Common myeloid progenitor, CD34-positive (primary cell): ENCODE measurements at regions of chr5 and their contacts with region 1.

Region 1: DNA sequence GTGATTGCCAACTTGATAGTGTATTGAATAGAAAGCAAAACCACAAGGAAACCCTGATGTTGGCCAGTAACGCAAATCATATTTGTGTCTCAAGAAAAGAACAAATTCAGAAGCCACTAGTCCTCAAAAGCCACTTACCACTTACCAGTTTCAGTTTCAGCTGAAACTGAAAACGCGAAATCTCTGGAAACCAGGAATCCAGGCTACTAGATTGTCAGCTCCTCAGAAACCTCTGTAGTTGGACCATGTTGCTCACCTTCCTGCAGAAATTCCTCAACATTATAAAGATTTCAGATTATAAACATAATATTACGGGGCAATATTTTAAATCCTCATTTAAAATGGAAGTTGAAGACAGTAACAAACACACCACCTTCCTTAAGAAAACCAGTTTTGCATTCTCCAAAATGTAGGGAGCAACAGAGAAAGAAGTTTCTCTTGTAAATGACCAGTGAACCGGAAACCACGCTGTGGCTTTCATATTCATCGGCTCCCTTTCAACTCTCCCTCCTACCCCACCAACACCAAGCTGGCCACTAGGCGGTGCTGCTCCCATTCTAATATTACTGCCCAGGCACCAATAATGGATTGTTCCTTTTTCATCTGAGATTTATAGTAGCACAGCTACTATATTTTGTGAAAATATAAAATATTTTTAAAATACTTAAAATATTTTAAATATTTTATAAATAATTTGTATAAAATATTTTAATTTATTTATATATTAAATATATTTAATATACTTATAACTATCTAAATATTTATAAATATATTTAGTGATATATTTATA is 8.7 kb upstream of the TMED7 start:
- DNase-seq: peak; percentile 85 to 93 (median 91)
- H3K4me3 ChIP-seq: peak overlapping the region in 6 of 7 experiments; percentile 61 to 87 (median 77)
- H3K27ac ChIP-seq: peak overlapping the region in 1 of 2 experiments; percentile 38
- H3K4me1 ChIP-seq: peaks cover 2 to 10% (median 4%) of the 10 kb centered on the region in 4 experiments
- H3K27me3 ChIP-seq: no peaks in the 10 kb centered on the region

Region 2: DNA sequence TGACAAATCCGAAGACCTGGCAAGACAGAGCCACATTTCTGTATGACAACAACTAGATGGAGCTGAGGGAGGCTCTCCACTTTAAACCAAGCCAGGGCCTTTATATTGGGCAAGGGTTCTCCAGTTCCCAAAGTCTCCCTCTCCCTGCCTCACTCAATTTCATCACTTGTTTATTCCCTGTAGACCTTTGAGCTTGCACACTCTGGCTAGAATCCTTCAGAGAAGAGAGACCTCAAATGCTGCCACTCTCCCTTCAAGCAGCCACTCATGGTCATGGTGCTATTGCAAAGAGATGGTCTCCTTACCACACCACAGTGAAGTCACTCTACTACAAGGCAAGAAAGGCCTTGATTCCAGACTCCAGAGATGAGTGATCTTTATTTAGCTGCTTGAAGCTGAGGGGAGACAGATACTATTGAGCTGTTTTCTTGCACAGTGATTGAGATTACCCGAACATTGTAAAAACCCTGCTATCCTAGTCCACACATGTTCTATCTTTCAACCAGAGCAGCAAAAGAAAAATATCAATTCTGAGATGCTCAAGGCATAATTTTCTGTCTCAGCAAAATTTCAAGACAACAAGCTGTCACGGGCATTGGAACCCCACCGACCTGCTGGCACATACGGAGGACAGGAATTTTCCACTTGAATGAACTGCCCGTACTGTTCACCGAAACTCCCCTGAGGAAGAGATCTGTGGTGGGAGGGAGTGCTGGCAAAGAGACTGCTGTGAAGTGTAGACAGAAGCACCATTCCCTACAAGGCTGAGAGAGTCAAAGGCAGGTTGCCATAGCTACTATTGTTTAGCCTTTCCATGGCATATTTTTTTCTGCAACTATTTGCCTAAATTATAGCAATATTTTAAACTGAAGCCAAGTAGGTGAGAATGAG is 100.8 kb after region 1 on chr5:
- CTCF ChIA-PET with region 1: no interaction called
- POLR2A ChIA-PET with region 1: no interaction called
- DNase-seq: no peak
- H3K4me3 ChIP-seq: no peak overlapping the region
- H3K27ac ChIP-seq: no peak overlapping the region
- H3K4me1 ChIP-seq: no peaks in the 10 kb centered on the region
- H3K27me3 ChIP-seq: peaks cover 0 to 6% (median 4%) of the 10 kb centered on the region in 5 experiments

Region 3: GRCh38 chr5:115857636-115858309 is 223.2 kb after region 1 on chr5:
- CTCF ChIA-PET with region 1: no interaction called
- POLR2A ChIA-PET with region 1: no interaction called
- DNase-seq: peak in 1 of 3 donors; percentile 10
- H3K4me3 ChIP-seq: no peak overlapping the region
- H3K27ac ChIP-seq: no peak overlapping the region
- H3K4me1 ChIP-seq: peaks cover 0 to 5% (median 0%) of the 10 kb centered on the region in 4 experiments
- H3K27me3 ChIP-seq: no peaks in the 10 kb centered on the region

Region 4: DNA sequence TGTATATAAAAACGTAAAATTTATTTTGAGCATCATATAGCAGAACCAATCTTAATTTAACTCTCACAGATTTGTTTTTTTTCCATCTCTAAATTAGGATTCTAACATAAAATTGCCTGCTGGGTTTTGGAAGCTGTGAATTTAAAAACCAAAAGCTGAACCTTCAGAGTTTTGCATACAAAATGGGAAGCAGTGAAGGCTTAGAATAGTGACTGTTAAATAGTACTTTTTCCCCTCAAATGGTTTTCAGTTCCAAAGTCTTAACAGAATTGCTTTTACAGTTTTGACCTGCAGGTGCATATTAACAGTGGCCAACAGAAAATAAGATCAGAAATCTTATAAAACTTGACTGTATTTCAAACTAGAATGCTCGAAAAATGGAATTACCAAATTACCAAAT is 272.6 kb after region 1 on chr5:
- CTCF ChIA-PET with region 1: no interaction called
- POLR2A ChIA-PET with region 1: no interaction called
- DNase-seq: no peak
- H3K4me3 ChIP-seq: no peak overlapping the region
- H3K27ac ChIP-seq: no peak overlapping the region
- H3K4me1 ChIP-seq: no peaks in the 10 kb centered on the region
- H3K27me3 ChIP-seq: no peaks in the 10 kb centered on the region

Region 5: DNA sequence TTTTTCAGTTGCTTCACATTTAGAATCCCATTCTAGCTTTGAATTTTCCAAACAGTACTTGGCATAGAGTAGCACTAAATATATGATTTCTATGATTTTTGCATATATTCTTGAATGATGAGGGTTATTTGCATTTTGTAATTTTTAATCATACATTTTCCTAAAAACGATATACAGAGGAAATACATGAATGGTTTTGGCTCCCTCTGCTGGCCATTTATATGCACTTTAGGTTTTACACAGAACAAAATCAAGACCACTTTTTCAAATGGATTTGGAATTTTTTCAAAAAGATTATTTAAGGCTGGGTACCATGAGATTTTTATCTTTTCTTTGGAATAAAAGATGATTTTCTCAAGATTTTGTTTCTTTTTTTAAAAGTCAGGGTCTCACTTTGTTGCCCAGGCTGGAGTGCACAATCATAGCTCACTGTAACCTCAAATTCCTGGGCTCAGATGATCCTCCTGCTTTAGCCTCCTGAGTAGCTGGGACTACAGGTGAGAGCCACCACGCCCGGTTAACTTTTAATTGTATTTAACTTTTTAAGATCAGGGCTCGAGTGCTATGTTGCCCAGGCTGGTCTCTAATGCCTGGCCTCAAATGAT is 433.6 kb after region 1 on chr5:
- CTCF ChIA-PET with region 1: interaction called, 14 read pairs
- POLR2A ChIA-PET with region 1: no interaction called
- DNase-seq: peak; percentile 57 to 86 (median 79)
- H3K4me3 ChIP-seq: no peak overlapping the region
- H3K27ac ChIP-seq: no peak overlapping the region
- H3K4me1 ChIP-seq: no peaks in the 10 kb centered on the region
- H3K27me3 ChIP-seq: no peaks in the 10 kb centered on the region